ENCODE measurements at regions of chr9 and their contacts with region 1.

Region 1: GRCh38 chr9:5644501-5644900 is 15.6 kb downstream of the RIC1 start:
- DNase-seq: no peak
- CTCF ChIP-seq: no peak

Region 2: DNA sequence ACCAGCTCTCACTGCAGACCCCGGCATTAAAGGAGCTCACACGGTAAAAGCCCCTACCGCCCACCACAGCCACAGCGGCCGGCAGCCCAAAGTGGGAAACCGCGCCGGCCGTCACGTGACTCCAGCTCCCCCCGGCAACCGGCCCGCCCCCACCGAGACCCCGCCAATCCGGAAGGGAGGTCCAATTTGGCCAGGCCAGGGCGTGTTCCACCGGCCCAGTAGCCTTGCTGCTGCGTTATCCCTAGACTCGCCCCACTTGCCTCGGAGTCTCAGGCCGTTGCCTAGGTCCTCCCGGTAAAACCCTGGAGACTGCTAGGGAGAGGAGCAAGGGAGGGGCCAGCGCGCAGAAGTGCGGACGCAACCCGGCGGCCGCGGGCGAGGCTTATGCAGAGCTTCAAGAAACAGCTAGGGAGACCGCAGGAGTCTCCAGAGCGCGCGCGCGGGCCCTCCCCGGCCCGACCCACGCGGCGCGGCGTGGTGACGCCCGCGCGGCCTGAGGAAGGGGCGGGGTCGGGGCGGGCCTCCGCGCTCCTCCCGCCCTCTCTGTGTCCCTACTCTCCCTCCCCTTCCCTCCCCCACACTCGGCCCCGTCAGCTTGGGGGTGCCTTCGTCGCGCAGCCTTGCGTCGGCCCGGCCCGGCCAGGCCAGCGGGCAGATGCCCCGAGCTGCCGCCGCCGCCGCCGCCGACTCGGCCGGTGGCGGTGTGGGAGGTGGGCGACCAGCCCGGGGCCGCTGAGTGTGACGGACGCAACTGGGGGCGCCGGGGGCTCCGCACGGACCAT is 15.8 kb before region 1 on chr9 and contains the start of gene RIC1:
- CTCF ChIA-PET with region 1: no interaction called
- POLR2A ChIA-PET with region 1: interaction called, 19 read pairs
- DNase-seq: peak; percentile 96
- CTCF ChIP-seq: no peak

Region 3: DNA sequence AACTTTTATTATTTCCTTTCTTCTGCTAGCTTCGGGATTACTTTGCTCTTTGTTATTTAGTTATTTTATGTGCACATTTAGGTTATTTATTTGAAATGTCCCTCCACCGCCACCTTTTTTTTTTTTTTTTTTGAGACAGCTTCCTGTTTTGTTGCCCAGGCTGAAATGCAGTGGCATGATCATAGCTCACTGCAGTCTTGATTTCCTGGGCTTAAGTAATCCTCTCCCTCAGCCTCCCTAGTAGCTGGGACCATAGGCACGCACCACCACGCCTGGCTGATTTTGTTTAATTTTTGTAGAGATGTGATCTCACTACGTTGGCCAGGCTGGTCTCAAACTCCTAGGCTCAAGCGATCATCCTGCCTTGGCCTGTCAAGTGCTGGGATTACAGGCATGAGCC is 22.9 kb after region 1 on chr9:
- CTCF ChIA-PET with region 1: no interaction called
- POLR2A ChIA-PET with region 1: no interaction called
- DNase-seq: no peak
- CTCF ChIP-seq: no peak